Right lobe of liver (tissue), 6 donors: ENCODE measurements at regions of chr12 and their contacts with region 1.

Region 1: GRCh38 chr12:53427905-53428594 is 4.4 kb downstream of the AMHR2 start:
- DNase-seq: peak in 1 of 3 donors; percentile 15
- ATAC-seq: peak in 1 of 4 donors; percentile 49
- H3K4me3 ChIP-seq: no peak overlapping the region
- H3K27ac ChIP-seq: no peak overlapping the region
- H3K4me1 ChIP-seq: no peaks in the 10 kb centered on the region
- H3K27me3 ChIP-seq: no peaks in the 10 kb centered on the region
- CTCF ChIP-seq: no peak
- POLR2A ChIP-seq: no peak

Region 2: GRCh38 chr12:53344824-53345485 is 83.1 kb before region 1 on chr12:
- intact Hi-C with region 1: loop called in 1 of 2 experiments (anchors 5 kb)
- DNase-seq: peak; percentile 69 to 73 (median 70)
- ATAC-seq: peak; percentile 90 to 95 (median 92)
- H3K4me3 ChIP-seq: peak overlapping the region; percentile 50 to 55 (median 54)
- H3K27ac ChIP-seq: peak overlapping the region; percentile 31 to 69 (median 43)
- H3K4me1 ChIP-seq: no peaks in the 10 kb centered on the region
- H3K27me3 ChIP-seq: no peaks in the 10 kb centered on the region
- CTCF ChIP-seq: peak; percentile 59 to 74 (median 71)
- POLR2A ChIP-seq: peak; percentile 33

Region 3: GRCh38 chr12:53523131-53523530 is 95.1 kb after region 1 on chr12:
- intact Hi-C with region 1: no loop called
- DNase-seq: no peak
- ATAC-seq: no peak
- H3K4me3 ChIP-seq: no peak overlapping the region
- H3K27ac ChIP-seq: no peak overlapping the region
- H3K4me1 ChIP-seq: no peaks in the 10 kb centered on the region
- H3K27me3 ChIP-seq: no peaks in the 10 kb centered on the region
- CTCF ChIP-seq: no peak
- POLR2A ChIP-seq: no peak